Psoas muscle (tissue), 8 donors: ENCODE measurements at regions of chr20 and their contacts with region 1.

Region 1: GRCh38 chr20:19706463-19706862 is 51.6 kb upstream of the RIN2 start:
- DNase-seq: no peak
- ATAC-seq: no peak
- H3K4me3 ChIP-seq: no peak overlapping the region
- H3K27ac ChIP-seq: no peak overlapping the region
- H3K4me1 ChIP-seq: no peaks in the 10 kb centered on the region
- H3K27me3 ChIP-seq: no peaks in the 10 kb centered on the region
- CTCF ChIP-seq: no peak

Region 2: GRCh38 chr20:19802492-19803158 is 96.2 kb after region 1 on chr20:
- intact Hi-C with region 1: loop called in 1 of 2 experiments (anchors 10 kb)
- DNase-seq: no peak
- ATAC-seq: peak; percentile 44 to 48 (median 45)
- H3K4me3 ChIP-seq: no peak overlapping the region
- H3K27ac ChIP-seq: no peak overlapping the region
- H3K4me1 ChIP-seq: peaks cover 10% of the 10 kb centered on the region
- H3K27me3 ChIP-seq: no peaks in the 10 kb centered on the region
- CTCF ChIP-seq: peak; percentile 23